PC-9 (cell line): ENCODE measurements at regions of chr20 and their contacts with region 1.

Region 1: DNA sequence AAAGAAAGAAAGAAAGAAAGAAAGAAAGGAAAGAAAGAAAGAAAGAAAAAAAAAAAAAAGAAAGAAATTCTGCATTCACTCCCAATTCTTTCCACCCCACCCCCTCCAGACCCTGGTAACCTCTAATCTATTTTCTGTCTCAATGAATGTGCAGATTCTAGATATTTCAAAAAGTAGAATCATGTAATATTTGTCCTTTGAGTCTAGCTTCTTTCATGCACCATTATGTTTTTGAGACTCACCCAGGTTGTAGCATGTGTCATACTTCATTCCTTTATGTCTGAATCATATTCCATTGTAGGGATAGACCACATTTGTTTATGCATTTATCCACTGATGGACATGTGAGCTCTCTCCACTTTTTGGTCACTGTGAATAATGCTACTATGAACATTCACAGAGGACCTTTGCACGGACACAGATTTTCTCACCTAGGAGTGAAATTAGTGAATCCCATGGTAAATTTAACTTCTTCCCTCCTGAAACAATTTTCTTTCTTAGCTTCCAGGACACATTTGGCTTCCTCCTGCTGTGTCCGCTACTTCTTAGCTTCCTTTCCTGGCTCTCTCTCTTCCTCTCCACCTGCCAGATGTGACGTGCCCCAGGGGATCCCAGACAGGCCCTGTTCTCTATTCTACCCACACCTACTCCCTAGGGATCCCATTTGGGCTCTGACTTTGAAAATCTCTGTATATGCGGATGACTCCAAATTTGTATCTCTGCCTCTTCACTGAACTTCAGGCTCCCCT is 24.1 kb upstream of the ARFGEF2 start:
- DNase-seq: peak; percentile 37 to 96
- H3K4me3 ChIP-seq: no peak overlapping the region
- H3K27ac ChIP-seq: peak overlapping the region; percentile 70
- H3K4me1 ChIP-seq: peaks cover 29% of the 10 kb centered on the region
- H3K27me3 ChIP-seq: no peaks in the 10 kb centered on the region
- CTCF ChIP-seq: no peak

Region 2: DNA sequence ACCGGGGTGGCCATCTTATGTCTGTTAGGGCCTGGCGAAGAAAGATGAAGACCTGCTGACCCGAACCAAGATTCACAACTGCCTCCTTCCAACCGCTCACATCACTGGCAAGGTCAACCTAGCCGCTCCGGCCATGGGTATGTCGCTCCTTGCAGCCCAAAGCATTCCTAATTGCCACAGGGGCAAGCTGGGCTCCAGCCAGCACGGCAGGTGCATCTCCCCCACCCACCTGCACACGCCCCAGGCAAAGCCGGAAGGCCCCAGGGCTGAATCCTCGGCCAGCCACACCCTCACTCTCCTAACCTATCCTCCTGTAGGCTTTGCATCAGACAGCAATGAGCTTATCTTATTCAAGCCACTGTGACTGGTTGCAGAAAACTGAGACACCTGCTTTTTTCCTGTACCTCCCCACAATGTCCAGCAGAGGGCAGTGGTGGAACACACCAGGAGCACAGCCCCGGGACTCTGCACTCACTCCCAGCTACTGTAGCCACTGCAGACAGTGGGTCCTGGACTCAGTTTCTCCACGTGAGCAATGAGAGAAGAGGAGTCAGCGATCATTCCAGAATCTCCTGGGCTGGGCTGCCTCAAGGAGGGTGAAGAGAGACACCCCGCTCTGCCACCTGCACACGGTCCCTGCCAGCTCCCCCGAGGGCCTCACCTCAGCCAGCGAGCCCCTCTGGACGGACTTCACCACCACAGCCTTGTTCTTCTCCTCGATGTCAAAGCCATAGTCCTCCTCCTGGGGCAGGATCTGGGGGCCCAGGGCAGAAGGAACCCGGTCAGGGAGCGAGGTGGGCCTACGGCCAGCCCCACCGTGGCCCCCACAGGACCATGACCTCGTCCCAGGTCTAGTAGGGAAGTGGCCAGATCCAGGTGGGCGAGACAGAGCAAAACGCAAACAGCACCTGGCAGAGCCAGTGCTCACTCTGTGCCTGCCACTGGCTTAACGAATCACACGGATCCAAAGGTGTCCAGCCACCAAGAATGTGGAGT is 239.6 kb before region 1 on chr20:
- CTCF ChIA-PET with region 1: interaction called, 12 read pairs
- POLR2A ChIA-PET with region 1: interaction called, 4 read pairs
- intact Hi-C with region 1: no loop called
- DNase-seq: peak; percentile 67 to 73
- H3K4me3 ChIP-seq: no peak overlapping the region
- H3K27ac ChIP-seq: no peak overlapping the region
- H3K4me1 ChIP-seq: no peaks in the 10 kb centered on the region
- H3K27me3 ChIP-seq: no peaks in the 10 kb centered on the region
- CTCF ChIP-seq: peak; percentile 98

Region 3: GRCh38 chr20:48697879-48698724 is 199.3 kb before region 1 on chr20:
- CTCF ChIA-PET with region 1: no interaction called
- POLR2A ChIA-PET with region 1: no interaction called
- intact Hi-C with region 1: loop called (anchors 1 kb)
- DNase-seq: peak; percentile 95 to 96
- H3K4me3 ChIP-seq: no peak overlapping the region
- H3K27ac ChIP-seq: peak overlapping the region; percentile 59
- H3K4me1 ChIP-seq: peaks cover 24% of the 10 kb centered on the region
- H3K27me3 ChIP-seq: no peaks in the 10 kb centered on the region
- CTCF ChIP-seq: no peak

Region 4: DNA sequence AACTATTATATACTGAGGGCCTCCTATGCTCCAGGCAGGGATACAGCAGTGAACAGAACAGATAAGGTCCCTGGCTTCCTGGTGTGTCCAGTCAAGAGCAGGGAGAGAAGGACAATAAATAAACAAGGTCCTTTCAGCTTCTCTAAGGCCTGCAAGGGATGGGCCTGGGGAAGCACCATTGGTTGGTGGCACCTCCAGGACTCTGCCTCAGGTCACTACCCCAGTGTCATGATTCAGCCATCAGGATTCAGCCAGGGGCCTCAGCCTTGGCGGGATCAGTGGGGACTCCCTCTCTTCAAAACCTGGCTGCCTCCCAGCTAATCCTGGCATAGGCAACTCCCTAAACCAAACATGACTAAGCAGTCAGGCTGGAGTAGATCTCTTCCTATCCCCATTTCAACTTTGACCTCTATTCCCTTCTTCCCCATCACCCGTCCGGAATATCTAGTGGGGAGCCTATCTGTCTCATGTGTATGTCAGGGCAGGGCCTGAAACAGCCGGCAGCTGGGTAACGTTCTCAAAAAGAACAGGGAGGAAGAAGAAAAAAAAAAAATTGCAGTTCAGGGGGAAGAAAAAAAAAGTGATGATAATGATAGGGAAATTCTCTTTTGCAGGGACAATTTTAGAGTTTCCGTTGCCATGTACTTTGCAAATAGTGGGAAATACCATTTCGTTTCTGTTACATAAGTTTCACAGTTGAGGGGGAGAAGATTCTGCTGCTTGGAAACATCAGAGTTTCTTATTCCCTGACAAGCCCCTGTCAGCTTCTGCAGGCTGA is 65.7 kb before region 1 on chr20:
- CTCF ChIA-PET with region 1: interaction called, 3 read pairs
- POLR2A ChIA-PET with region 1: interaction called, 4 read pairs
- intact Hi-C with region 1: loop called (anchors 5 kb)
- DNase-seq: peak; percentile 86 to 88
- H3K4me3 ChIP-seq: no peak overlapping the region
- H3K27ac ChIP-seq: peak overlapping the region; percentile 59
- H3K4me1 ChIP-seq: peaks cover 28% of the 10 kb centered on the region
- H3K27me3 ChIP-seq: no peaks in the 10 kb centered on the region
- CTCF ChIP-seq: no peak; the same call in 1 of the 2 replicates

Region 5: DNA sequence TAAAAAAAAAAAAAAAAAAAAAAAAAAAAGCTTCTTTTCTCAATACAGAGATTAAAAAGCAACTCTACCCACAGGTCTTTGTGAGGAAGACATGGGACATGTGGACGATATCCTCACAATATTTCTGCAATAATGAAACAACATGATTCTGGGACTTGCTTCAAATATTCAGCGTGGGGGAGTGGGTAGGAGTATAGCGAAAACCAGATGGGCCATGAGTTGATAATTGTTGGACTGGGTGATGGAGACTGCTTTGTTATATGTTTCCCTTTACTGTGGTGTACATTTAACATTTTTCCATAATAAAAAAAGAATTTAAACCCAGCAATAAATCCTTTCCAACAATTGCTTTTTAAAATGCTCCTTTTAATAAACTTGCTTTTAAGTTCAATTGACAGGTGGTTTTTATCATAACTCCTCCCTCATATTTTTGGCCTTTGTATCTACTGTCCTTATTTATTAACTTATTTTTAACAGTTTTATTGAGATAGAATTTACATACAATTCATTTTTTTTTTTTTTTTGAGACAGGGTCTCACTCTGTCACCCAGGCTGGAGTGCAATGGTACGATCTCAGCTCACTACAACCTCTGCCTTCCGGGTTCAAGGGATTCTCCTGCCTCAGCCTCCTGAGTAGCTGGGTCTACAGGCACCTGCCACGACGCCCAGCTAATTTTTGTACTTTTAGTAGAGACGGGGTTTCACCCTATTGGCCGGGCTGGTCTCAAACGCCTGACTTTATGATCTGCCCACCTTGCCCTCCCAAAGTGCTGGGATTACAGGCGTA is 16.2 kb before region 1 on chr20:
- CTCF ChIA-PET with region 1: no interaction called
- POLR2A ChIA-PET with region 1: no interaction called
- intact Hi-C with region 1: no loop called
- DNase-seq: no peak
- H3K4me3 ChIP-seq: no peak overlapping the region
- H3K27ac ChIP-seq: no peak overlapping the region
- H3K4me1 ChIP-seq: peaks cover 21% of the 10 kb centered on the region
- H3K27me3 ChIP-seq: no peaks in the 10 kb centered on the region
- CTCF ChIP-seq: no peak

Region 6: DNA sequence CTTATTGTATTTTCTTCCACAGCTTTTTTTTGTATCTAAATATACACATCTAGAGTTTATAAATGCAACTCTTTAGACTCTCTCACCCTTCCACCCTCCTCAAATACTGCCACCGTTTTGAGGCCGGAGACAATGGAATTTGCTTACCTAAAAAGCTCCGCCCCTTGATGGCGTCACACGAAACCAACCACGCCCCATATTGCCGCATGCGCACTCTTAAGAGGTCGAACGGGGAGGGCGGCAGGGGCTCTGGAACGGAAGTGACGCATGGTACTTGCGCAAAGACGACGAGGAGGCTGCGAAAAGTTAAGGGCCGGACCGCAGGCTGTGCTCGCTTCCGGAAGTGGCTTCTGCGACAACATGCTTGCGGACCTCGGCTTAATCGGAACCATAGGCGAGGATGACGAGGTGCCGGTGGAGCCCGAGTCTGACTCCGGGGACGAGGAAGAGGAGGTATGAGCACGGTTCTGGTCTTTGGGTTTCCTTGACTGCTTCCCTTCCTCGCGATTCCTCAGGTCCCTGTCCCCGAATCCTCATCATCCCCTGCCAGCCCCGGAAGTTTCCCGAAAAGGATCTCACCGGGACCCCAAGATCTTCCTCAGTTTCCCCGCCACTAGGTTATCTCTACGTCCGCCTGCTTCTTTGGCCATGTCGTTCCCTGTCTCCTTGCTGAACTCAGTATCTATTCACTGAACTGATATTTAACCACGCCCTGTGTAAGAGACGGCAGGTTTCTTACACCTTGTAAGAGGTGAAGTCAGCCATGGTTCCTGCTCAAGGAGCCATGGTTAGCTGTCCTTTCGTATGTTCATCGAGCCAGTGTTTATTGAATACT is 321.9 kb after region 1 on chr20 and contains the start of gene DDX27:
- CTCF ChIA-PET with region 1: interaction called, 14 read pairs
- POLR2A ChIA-PET with region 1: no interaction called
- intact Hi-C with region 1: no loop called
- DNase-seq: peak; percentile 96 to 98
- H3K4me3 ChIP-seq: peak within 1 kb of the TSS; percentile 71
- H3K27ac ChIP-seq: peak within 1 kb of the TSS; percentile 53
- H3K4me1 ChIP-seq: peaks cover 12% of the 10 kb centered on the region
- H3K27me3 ChIP-seq: no peaks in the 10 kb centered on the region
- CTCF ChIP-seq: no peak
- total RNA-seq, gene DDX27: 50.6 and 64.4 TPM in 2 replicates